B cell (primary cell): ENCODE measurements at regions of chr11 and their contacts with region 1.

Region 1: DNA sequence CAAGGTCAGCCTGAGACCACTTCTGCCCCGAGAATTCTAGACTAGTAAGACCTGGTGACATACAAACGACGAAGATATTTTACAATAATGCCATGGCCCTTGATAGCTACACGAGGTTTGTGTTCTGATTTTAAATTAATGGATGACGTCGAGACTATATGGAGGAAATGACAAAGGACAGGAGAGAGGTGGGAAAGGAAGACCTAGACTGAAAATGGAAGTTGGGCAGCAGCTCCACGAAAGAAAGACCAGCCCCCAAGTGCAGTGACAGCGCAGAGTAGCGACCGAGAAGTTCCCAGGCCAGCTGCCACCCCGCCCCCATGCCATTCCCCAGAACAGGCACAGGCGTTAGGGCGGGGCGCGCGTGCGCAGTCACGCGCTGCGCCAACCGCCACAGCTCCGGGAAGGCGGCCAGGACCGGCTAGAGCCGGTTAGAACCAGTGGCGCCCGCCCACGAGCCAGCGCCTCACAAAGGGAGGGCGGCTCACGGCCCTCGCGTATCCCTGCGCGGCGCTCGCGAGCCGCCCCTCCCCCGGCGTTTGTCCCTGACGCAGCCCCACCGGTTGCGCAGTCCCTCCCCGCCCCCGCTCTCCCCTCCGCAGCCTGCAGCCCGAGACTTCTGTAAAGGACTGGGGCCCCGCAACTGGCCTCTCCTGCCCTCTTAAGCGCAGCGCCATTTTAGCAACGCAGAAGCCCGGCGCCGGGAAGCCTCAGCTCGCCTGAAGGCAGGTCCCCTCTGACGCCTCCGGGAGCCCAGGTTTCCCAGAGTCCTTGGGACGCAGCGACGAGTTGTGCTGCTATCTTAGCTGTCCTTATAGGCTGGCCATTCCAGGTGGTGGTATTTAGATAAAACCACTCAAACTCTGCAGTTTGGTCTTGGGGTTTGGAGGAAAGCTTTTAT is 1.5 kb upstream of the MALAT1 start:
- DNase-seq: peak; percentile 99
- ATAC-seq: peak; percentile 76
- H3K4me3 ChIP-seq: peak overlapping the region; percentile 76 to 100 (median 93)
- H3K4me3 Mint-ChIP-seq: no peak overlapping the region
- H3K27ac ChIP-seq: peak overlapping the region; percentile 99 to 100
- H3K27ac Mint-ChIP-seq: no peak overlapping the region
- H3K4me1 ChIP-seq: peaks cover 31 to 53% of the 10 kb centered on the region in 2 donors
- H3K4me1 Mint-ChIP-seq: peaks cover 43% of the 10 kb centered on the region
- H3K27me3 ChIP-seq: no peaks in the 10 kb centered on the region
- H3K27me3 Mint-ChIP-seq: no peaks in the 10 kb centered on the region
- CTCF ChIP-seq: no peak

Region 2: GRCh38 chr11:65329944-65330403 is 167.4 kb before region 1 on chr11:
- CTCF ChIA-PET with region 1: interaction called, 3 read pairs
- POLR2A ChIA-PET with region 1: interaction called, 13 read pairs
- intact Hi-C with region 1: no loop called
- DNase-seq: peak; percentile 93
- ATAC-seq: peak; percentile 42
- H3K4me3 ChIP-seq: peak overlapping the region in 4 of 5 experiments; percentile 5 to 48 (median 44)
- H3K4me3 Mint-ChIP-seq: peak overlapping the region; percentile 76
- H3K27ac ChIP-seq: peak overlapping the region; percentile 50 to 69
- H3K27ac Mint-ChIP-seq: peak overlapping the region; percentile 90
- H3K4me1 ChIP-seq: peaks cover 23 to 28% of the 10 kb centered on the region in 2 donors
- H3K4me1 Mint-ChIP-seq: peaks cover 22% of the 10 kb centered on the region
- H3K27me3 ChIP-seq: no peaks in the 10 kb centered on the region
- H3K27me3 Mint-ChIP-seq: no peaks in the 10 kb centered on the region
- CTCF ChIP-seq: peak; percentile 86

Region 3: DNA sequence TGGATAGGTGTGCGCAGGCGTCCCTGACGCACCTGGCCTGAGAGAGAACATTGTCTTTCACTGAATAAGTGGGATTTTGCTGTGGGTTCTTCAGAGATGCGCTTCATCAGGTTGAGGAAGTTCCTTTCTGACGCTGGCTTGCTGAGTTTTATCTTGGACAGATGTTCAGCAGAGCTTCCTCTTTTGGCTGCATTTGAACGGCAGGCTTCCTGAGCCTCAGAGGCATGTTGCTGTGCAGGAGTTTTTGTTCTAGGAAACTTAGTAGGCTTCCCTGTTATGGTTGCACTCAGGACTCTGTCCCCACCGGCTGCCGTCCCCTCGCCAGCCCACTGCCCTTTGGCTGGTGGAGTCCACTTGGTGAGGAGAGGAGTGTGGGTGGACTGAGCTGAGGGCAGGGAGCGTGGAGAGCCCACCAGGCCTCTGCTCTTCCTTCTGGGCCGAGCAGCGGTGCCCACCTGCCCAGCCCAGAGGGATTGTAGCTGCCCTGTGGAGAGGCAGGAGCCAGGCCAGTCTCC is 93.7 kb before region 1 on chr11:
- CTCF ChIA-PET with region 1: interaction called, 5 read pairs
- POLR2A ChIA-PET with region 1: interaction called, 22 read pairs
- intact Hi-C with region 1: no loop called
- DNase-seq: peak; percentile 91
- ATAC-seq: peak; percentile 68
- H3K4me3 ChIP-seq: peak overlapping the region in 2 of 5 experiments; percentile 10 to 22
- H3K4me3 Mint-ChIP-seq: peak overlapping the region; percentile 71
- H3K27ac ChIP-seq: peak overlapping the region; percentile 81 to 86
- H3K27ac Mint-ChIP-seq: peak overlapping the region; percentile 96
- H3K4me1 ChIP-seq: peaks cover 34 to 57% of the 10 kb centered on the region in 2 donors
- H3K4me1 Mint-ChIP-seq: peaks cover 40% of the 10 kb centered on the region
- H3K27me3 ChIP-seq: no peaks in the 10 kb centered on the region
- H3K27me3 Mint-ChIP-seq: no peaks in the 10 kb centered on the region
- CTCF ChIP-seq: no peak

Region 4: GRCh38 chr11:65432686-65433582 is 64.5 kb before region 1 on chr11:
- CTCF ChIA-PET with region 1: interaction called, 7 read pairs
- POLR2A ChIA-PET with region 1: interaction called, 1,159 read pairs
- intact Hi-C with region 1: no loop called
- DNase-seq: peak; percentile 75
- ATAC-seq: peak; percentile 20
- H3K4me3 ChIP-seq: no peak overlapping the region
- H3K4me3 Mint-ChIP-seq: peak overlapping the region; percentile 32
- H3K27ac ChIP-seq: no peak overlapping the region
- H3K27ac Mint-ChIP-seq: peak overlapping the region; percentile 47
- H3K4me1 ChIP-seq: peaks cover 48 to 53% of the 10 kb centered on the region in 2 donors
- H3K4me1 Mint-ChIP-seq: peaks cover 61% of the 10 kb centered on the region
- H3K27me3 ChIP-seq: no peaks in the 10 kb centered on the region
- H3K27me3 Mint-ChIP-seq: no peaks in the 10 kb centered on the region
- CTCF ChIP-seq: peak; percentile 62

Region 5: DNA sequence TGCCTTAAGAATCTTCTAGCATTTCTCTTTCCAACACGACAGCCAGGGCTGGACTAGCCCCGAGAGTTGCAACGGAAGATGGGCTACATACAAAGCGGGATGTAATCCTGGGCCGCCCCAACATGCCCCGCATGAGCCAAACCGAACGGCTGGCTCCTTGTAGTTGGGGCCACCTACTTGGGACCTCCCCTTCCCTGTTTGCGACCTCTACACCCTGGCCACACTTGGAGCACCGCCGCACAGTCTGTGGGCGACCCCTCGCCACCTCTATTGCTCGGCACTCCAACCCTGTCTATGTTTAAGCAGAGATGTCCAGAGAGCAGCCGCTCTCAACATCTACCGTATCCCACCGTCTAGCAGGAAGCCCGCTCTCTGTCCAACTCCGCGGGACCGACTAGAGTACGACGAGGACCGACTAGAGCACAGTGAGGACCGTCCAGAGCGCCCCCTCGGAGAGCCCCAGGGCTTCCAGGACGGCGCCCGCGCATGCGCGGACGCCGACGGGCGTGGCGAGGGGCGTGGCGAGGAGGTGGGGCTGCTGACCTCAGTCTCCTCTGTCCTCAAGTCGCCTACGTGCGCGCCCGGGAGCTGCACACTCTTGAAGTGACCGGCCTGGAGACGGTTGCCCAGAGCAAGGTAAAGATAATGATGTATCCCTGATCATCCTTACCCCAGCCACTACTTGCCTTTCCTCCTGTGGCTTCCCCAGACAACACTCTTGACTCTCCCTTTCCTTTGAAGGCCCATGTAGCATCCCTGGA is 42.5 kb before region 1 on chr11:
- CTCF ChIA-PET with region 1: interaction called, 3 read pairs
- POLR2A ChIA-PET with region 1: interaction called, 9 read pairs
- intact Hi-C with region 1: loop called (anchors 1 kb)
- DNase-seq: peak; percentile 91
- ATAC-seq: peak; percentile 97
- H3K4me3 ChIP-seq: peak overlapping the region; percentile 63 to 80 (median 67)
- H3K4me3 Mint-ChIP-seq: peak overlapping the region; percentile 96
- H3K27ac ChIP-seq: peak overlapping the region; percentile 70
- H3K27ac Mint-ChIP-seq: peak overlapping the region; percentile 92
- H3K4me1 ChIP-seq: peaks cover 4 to 18% of the 10 kb centered on the region in 2 donors
- H3K4me1 Mint-ChIP-seq: peaks cover 32% of the 10 kb centered on the region
- H3K27me3 ChIP-seq: no peaks in the 10 kb centered on the region
- H3K27me3 Mint-ChIP-seq: no peaks in the 10 kb centered on the region
- CTCF ChIP-seq: no peak

Region 6: DNA sequence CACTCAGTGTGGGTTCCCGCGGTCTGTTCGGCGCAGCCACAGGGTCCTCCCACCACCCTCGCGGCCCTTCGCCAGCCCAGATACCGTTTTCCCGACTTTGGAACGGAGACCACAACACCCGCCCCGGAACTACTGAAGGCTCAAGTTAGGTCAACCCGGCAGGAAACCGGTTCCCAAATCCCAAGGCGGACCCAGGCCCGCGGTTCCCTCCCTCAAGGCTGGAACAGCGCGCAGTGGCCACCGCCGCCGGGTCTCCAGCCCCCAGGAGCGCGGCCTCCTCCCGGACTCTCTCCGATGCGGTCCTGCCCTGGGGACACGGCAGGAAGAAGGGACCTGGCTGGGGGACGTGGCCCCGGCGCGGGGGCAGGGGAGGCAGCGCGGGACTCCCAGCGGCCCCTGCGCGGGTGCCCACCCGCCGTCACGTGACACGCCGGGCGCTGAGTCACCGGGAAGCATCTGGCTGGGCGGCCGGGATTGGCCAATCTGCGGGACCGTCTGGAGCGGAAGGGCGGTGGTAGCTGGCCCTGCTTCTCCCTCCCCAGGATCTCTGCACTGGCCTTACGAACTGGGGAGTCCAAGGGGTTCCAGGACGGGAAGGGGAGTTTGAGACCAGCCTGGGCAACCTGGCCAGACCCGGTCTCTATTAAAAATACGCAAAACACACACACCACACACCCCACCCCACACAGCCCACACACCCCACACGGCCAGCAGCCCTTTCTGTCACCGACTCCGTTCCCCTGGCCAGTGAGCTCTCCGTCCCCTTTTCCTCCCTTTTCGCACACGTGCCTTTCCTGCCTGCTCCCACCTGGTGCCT is 20.0 kb before region 1 on chr11:
- CTCF ChIA-PET with region 1: interaction called, 39 read pairs
- POLR2A ChIA-PET with region 1: interaction called, 366 read pairs
- intact Hi-C with region 1: loop called (anchors 1 kb)
- DNase-seq: peak; percentile 90
- ATAC-seq: peak; percentile 87
- H3K4me3 ChIP-seq: peak overlapping the region; percentile 61 to 93 (median 83)
- H3K4me3 Mint-ChIP-seq: peak overlapping the region; percentile 96
- H3K27ac ChIP-seq: peak overlapping the region; percentile 88 to 92
- H3K27ac Mint-ChIP-seq: peak overlapping the region; percentile 99
- H3K4me1 ChIP-seq: peaks cover 11 to 32% of the 10 kb centered on the region in 2 donors
- H3K4me1 Mint-ChIP-seq: peaks cover 14% of the 10 kb centered on the region
- H3K27me3 ChIP-seq: no peaks in the 10 kb centered on the region
- H3K27me3 Mint-ChIP-seq: no peaks in the 10 kb centered on the region
- CTCF ChIP-seq: no peak

Region 7: GRCh38 chr11:65595543-65596281 is 98.3 kb after region 1 on chr11 and contains the start of gene KCNK7:
- CTCF ChIA-PET with region 1: no interaction called
- POLR2A ChIA-PET with region 1: no interaction called
- intact Hi-C with region 1: no loop called
- DNase-seq: no peak
- ATAC-seq: no peak
- H3K4me3 ChIP-seq: no peak within 1 kb of the TSS
- H3K4me3 Mint-ChIP-seq: no peak within 1 kb of the TSS
- H3K27ac ChIP-seq: no peak within 1 kb of the TSS
- H3K27ac Mint-ChIP-seq: peak within 1 kb of the TSS; percentile 17
- H3K4me1 ChIP-seq: peaks cover 3 to 16% of the 10 kb centered on the region in 2 donors
- H3K4me1 Mint-ChIP-seq: peaks cover 12% of the 10 kb centered on the region
- H3K27me3 ChIP-seq: no peaks in the 10 kb centered on the region
- H3K27me3 Mint-ChIP-seq: no peaks in the 10 kb centered on the region
- CTCF ChIP-seq: no peak
- total RNA-seq, gene KCNK7: 3.5 and 3.9 TPM in 2 replicates